Left cardiac atrium (tissue), 4 donors: ENCODE measurements at regions of chr1 and their contacts with region 1.

Region 1: DNA sequence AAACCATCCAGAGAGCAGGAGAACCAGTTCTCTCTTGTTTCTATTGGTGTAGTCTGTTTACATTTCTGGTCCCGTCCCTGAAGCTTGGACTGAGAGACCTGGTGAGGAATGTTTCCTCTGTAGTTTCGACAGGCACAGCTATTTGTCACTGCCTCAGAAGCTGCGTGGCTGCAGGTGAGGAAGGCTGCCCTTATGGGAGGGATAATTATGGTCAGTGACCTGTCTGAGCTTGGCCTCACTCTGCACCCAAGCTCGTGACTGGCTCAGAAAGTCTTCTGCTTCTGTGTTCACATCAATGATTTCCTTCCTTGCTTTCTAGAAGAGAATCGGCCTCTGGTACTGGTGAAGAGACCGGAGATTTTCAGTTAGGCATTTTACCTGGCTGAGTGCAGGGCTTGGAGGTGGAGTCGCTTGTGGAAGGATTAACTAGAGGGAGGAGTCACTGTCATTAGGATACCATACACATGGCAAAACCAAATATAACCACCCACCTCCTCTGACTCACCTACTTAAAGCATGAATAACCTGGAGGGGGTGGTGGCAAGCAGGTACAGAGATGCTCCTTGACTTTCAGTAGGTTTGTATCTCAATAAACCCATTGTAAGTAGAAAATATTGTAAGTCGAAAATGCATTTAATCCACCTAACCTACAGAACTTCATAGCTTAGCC is 19.9 kb upstream of the WDR26 start:
- DNase-seq: no peak
- ATAC-seq: no peak

Region 2: GRCh38 chr1:224113918-224114786 is 340.4 kb before region 1 on chr1 and contains the start of gene FBXO28:
- intact Hi-C with region 1: loop called (anchors 10 kb)
- DNase-seq: peak; percentile 96
- ATAC-seq: peak; percentile 100
- total RNA-seq, gene FBXO28: 17.3 to 20.1 TPM

Region 3: DNA sequence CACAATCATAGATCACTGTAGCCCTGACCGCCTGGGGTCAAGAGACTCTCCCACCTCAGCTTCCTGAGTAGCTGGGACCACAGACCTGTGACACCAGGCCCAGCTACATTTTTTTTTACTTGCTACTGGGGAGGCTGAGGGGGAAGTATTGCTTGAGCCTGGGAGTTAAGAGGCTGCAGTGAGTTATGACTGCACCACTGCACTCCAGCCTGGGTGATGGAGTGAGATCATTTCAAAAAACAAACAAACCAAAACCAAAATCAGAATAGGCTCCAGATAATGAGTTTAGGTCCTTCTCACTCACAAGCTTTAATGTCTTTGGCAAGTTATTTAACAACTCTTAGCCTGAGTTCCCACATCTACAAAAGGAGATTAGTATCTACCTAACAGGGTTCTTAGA is 42.8 kb before region 1 on chr1:
- intact Hi-C with region 1: no loop called
- DNase-seq: no peak
- ATAC-seq: no peak